ENCODE measurements at regions of chr3 and their contacts with region 1.

Region 1: GRCh38 chr3:155701882-155702465 is 42.9 kb downstream of the PLCH1 start:
- DNase-seq: peak; percentile 31
- ATAC-seq: peak; percentile 69
- H3K4me3 ChIP-seq: no peak overlapping the region
- H3K27ac ChIP-seq: no peak overlapping the region
- H3K4me1 ChIP-seq: no peaks in the 10 kb centered on the region
- H3K27me3 ChIP-seq: no peaks in the 10 kb centered on the region
- CTCF ChIP-seq: peak; percentile 44 to 83 (median 79); a peak in 5 of 6 replicates
- POLR2A ChIP-seq: no peak
- RAD21 ChIP-seq: peak; percentile 83

Region 2: DNA sequence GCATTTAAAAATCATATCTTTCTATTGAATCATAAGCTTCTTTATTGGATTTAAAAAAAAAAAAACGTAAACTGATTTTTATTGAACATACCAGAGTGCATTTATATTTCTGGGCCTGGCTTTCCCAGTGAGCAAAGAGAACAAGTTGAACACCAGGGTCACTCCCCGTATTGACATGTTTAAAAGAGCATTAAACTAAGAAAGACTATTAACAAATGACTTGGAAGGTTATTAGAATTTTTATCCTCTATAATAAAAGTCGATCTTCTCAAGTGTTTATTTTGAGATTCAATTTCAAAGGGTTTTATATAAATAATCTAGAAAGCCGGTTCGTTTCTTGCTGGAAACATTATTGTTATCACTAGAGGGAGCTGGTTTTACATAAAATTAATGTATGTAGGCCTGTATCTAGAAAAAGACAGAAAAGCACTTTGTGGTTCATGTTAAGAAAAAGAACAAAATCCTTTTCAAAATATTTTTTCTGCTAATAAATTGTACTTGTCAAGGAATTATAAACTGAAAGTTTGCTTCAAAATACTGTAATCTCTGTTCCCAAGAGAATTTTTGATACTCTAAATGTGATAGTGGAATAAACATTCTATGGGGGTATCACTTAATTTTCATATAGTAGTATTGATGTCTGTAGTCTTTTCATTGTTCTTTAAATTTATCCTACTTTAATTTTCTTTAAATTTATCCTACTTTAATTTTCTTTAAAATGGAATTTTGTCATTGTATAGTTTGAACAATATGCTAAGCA is 943.7 kb before region 1 on chr3:
- CTCF ChIA-PET with region 1: interaction called, 3 read pairs
- POLR2A ChIA-PET with region 1: no interaction called
- RAD21 ChIA-PET with region 1: no interaction called
- intact Hi-C with region 1: loop called (anchors 5 kb)
- DNase-seq: no peak
- ATAC-seq: peak; percentile 53; the same call in 1 of the 2 replicates
- H3K4me3 ChIP-seq: no peak overlapping the region
- H3K27ac ChIP-seq: no peak overlapping the region
- H3K4me1 ChIP-seq: no peaks in the 10 kb centered on the region
- H3K27me3 ChIP-seq: no peaks in the 10 kb centered on the region
- CTCF ChIP-seq: peak; percentile 35 to 54 (median 48)
- POLR2A ChIP-seq: no peak
- RAD21 ChIP-seq: peak; percentile 62

Region 3: DNA sequence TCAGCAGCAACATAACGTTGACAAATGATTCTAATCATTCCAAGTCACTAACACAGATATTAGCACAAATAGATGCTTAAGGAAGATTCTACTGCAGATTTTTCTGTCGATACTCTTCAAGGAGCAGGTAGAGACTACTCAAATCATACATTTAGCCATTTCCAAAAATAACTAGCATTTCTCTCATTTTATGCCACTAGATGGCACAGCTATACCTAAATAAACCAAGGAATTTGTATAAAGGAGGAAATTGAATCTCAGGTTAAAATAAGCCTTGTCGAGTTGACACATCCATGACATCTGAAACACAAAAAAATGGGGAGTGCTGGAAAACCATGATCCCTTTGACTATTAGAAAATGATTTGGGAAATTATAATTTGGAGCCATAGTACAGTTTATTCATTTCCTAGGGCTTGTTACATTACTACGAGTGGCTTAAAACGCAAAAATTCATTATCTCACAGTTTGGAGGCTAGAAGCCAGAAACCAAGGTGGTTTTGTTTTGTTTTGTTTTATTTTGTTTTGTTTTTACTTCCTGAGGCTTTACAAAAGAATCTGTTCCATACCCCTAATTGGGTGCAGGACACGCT is 349.0 kb before region 1 on chr3:
- CTCF ChIA-PET with region 1: interaction called, 50 read pairs
- POLR2A ChIA-PET with region 1: no interaction called
- RAD21 ChIA-PET with region 1: interaction called, 3 to 9 read pairs
- intact Hi-C with region 1: loop called (anchors 1 kb)
- DNase-seq: peak; percentile 40
- ATAC-seq: peak; percentile 68
- H3K4me3 ChIP-seq: no peak overlapping the region
- H3K27ac ChIP-seq: no peak overlapping the region
- H3K4me1 ChIP-seq: no peaks in the 10 kb centered on the region
- H3K27me3 ChIP-seq: no peaks in the 10 kb centered on the region
- CTCF ChIP-seq: peak; percentile 32 to 65 (median 45); a peak in 3 of 6 replicates
- POLR2A ChIP-seq: no peak
- RAD21 ChIP-seq: peak; percentile 71

Region 4: GRCh38 chr3:155382396-155383042 is 319.5 kb before region 1 on chr3:
- CTCF ChIA-PET with region 1: interaction called, 86 read pairs
- POLR2A ChIA-PET with region 1: no interaction called
- RAD21 ChIA-PET with region 1: interaction called, 4 to 5 read pairs
- intact Hi-C with region 1: loop called (anchors 1 kb)
- DNase-seq: peak; percentile 63
- ATAC-seq: peak; percentile 100
- H3K4me3 ChIP-seq: no peak overlapping the region
- H3K27ac ChIP-seq: no peak overlapping the region
- H3K4me1 ChIP-seq: no peaks in the 10 kb centered on the region
- H3K27me3 ChIP-seq: no peaks in the 10 kb centered on the region
- CTCF ChIP-seq: peak; percentile 73 to 81 (median 79)
- POLR2A ChIP-seq: no peak
- RAD21 ChIP-seq: peak; percentile 91

Region 5: DNA sequence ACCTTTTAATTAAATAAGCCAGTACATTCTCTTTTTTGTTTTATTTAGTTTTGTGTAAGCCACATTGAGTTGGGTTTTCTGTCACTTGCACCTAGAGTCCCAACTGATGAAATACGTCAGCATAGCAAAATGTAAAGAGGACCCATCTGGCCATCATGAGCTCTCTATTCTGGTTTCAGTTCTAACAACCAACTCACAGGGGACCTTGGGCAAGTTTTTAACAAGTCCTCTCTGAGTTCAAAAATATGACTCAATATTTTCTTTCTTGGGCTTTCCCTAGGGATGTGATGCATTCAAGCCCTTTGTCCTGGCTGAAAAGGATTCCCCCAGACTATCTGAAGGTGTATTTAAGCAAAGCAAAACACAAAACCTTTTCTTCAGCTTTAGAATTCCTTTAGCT is 10.0 kb after region 1 on chr3:
- CTCF ChIA-PET with region 1: interaction called, 14 read pairs
- POLR2A ChIA-PET with region 1: no interaction called
- RAD21 ChIA-PET with region 1: no interaction called
- intact Hi-C with region 1: no loop called
- DNase-seq: no peak
- ATAC-seq: no peak
- H3K4me3 ChIP-seq: no peak overlapping the region
- H3K27ac ChIP-seq: no peak overlapping the region
- H3K4me1 ChIP-seq: no peaks in the 10 kb centered on the region
- H3K27me3 ChIP-seq: no peaks in the 10 kb centered on the region
- CTCF ChIP-seq: no peak
- POLR2A ChIP-seq: no peak
- RAD21 ChIP-seq: no peak

Region 6: GRCh38 chr3:155753036-155753639 is 51.2 kb after region 1 on chr3:
- CTCF ChIA-PET with region 1: no interaction called
- POLR2A ChIA-PET with region 1: no interaction called
- RAD21 ChIA-PET with region 1: no interaction called
- intact Hi-C with region 1: no loop called
- DNase-seq: no peak
- ATAC-seq: peak; percentile 81
- H3K4me3 ChIP-seq: no peak overlapping the region
- H3K27ac ChIP-seq: no peak overlapping the region
- H3K4me1 ChIP-seq: peaks cover 0 to 8% of the 10 kb centered on the region in 2 experiments; a peak in 3 of 4 replicates
- H3K27me3 ChIP-seq: no peaks in the 10 kb centered on the region
- CTCF ChIP-seq: peak; percentile 47 to 74 (median 74); a peak in 5 of 6 replicates
- POLR2A ChIP-seq: no peak
- RAD21 ChIP-seq: peak; percentile 79

Region 7: GRCh38 chr3:155880286-155880685 is 178.3 kb after region 1 on chr3:
- CTCF ChIA-PET with region 1: no interaction called
- POLR2A ChIA-PET with region 1: no interaction called
- RAD21 ChIA-PET with region 1: no interaction called
- intact Hi-C with region 1: no loop called
- DNase-seq: no peak
- ATAC-seq: no peak
- H3K4me3 ChIP-seq: no peak overlapping the region
- H3K27ac ChIP-seq: no peak overlapping the region
- H3K4me1 ChIP-seq: no peaks in the 10 kb centered on the region
- H3K27me3 ChIP-seq: no peaks in the 10 kb centered on the region
- CTCF ChIP-seq: no peak
- POLR2A ChIP-seq: no peak
- RAD21 ChIP-seq: no peak

Measured in HCT116 (cell line).